Natural killer cell (primary cell): ENCODE measurements at regions of chr21 and their contacts with region 1.

Region 1: GRCh38 chr21:14864211-14865021 is 200.4 kb downstream of the NRIP1 start:
- DNase-seq: peak in 1 of 2 donors; percentile 41
- ATAC-seq: peak; percentile 46 to 66 (median 47)
- H3K4me3 ChIP-seq: no peak overlapping the region
- H3K4me3 Mint-ChIP-seq: no peak overlapping the region
- H3K27ac ChIP-seq: no peak overlapping the region
- H3K27ac Mint-ChIP-seq: no peak overlapping the region
- H3K4me1 ChIP-seq: no peaks in the 10 kb centered on the region
- H3K4me1 Mint-ChIP-seq: no peaks in the 10 kb centered on the region
- H3K27me3 ChIP-seq: no peaks in the 10 kb centered on the region
- H3K27me3 Mint-ChIP-seq: no peaks in the 10 kb centered on the region
- CTCF ChIP-seq: peak; percentile 28

Region 2: DNA sequence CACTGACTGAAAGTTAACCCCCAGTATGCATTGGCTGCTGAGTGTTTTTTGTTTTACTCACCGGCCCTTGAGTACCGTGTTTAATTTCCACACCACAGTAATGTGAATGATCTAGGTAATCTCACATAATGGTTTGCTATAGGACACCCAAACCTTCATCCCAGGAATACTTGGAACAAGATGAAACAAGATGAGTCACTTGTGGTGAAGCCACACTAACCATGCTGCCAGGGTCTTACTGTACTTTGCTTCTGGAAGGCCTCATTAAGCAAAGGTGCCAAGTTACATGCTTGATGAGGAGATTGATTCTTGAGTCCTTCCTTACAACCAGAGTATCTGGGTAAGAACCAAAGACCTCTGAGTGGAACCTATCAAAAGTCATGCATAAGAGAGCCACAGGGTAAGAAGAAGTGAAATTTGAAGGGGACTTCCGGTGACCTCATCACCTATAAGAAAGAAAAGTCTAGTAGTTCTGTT is 37.1 kb after region 1 on chr21:
- intact Hi-C with region 1: no loop called
- DNase-seq: no peak
- ATAC-seq: no peak
- H3K4me3 ChIP-seq: no peak overlapping the region
- H3K4me3 Mint-ChIP-seq: no peak overlapping the region
- H3K27ac ChIP-seq: no peak overlapping the region
- H3K27ac Mint-ChIP-seq: no peak overlapping the region
- H3K4me1 ChIP-seq: no peaks in the 10 kb centered on the region
- H3K4me1 Mint-ChIP-seq: peaks cover 0 to 4% of the 10 kb centered on the region in 2 donors
- H3K27me3 ChIP-seq: no peaks in the 10 kb centered on the region
- H3K27me3 Mint-ChIP-seq: no peaks in the 10 kb centered on the region
- CTCF ChIP-seq: no peak

Region 3: GRCh38 chr21:15483138-15483780 is 618.8 kb after region 1 on chr21:
- intact Hi-C with region 1: loop called (anchors 1 kb)
- DNase-seq: peak; percentile 68 to 87
- ATAC-seq: peak; percentile 95 to 100 (median 100)
- H3K4me3 ChIP-seq: no peak overlapping the region
- H3K4me3 Mint-ChIP-seq: no peak overlapping the region
- H3K27ac ChIP-seq: no peak overlapping the region
- H3K27ac Mint-ChIP-seq: no peak overlapping the region
- H3K4me1 ChIP-seq: no peaks in the 10 kb centered on the region
- H3K4me1 Mint-ChIP-seq: peaks cover 5 to 6% of the 10 kb centered on the region in 2 donors
- H3K27me3 ChIP-seq: no peaks in the 10 kb centered on the region
- H3K27me3 Mint-ChIP-seq: no peaks in the 10 kb centered on the region
- CTCF ChIP-seq: peak; percentile 84

Region 4: GRCh38 chr21:15514073-15514946 is 649.9 kb after region 1 on chr21:
- intact Hi-C with region 1: no loop called
- DNase-seq: peak; percentile 36 to 82
- ATAC-seq: peak; percentile 90 to 96 (median 93)
- H3K4me3 ChIP-seq: no peak overlapping the region
- H3K4me3 Mint-ChIP-seq: peak overlapping the region; percentile 76
- H3K27ac ChIP-seq: peak overlapping the region; percentile 79
- H3K27ac Mint-ChIP-seq: peak overlapping the region; percentile 72 to 91
- H3K4me1 ChIP-seq: peaks cover 9% of the 10 kb centered on the region
- H3K4me1 Mint-ChIP-seq: peaks cover 25 to 34% of the 10 kb centered on the region in 2 donors
- H3K27me3 ChIP-seq: no peaks in the 10 kb centered on the region
- H3K27me3 Mint-ChIP-seq: no peaks in the 10 kb centered on the region
- CTCF ChIP-seq: no peak